ENCODE measurements at regions of chr16 and their contacts with region 1.

Region 1: GRCh38 chr16:23333034-23333579 is 31.0 kb downstream of the SCNN1B start:
- DNase-seq: no peak
- H3K4me3 ChIP-seq: no peak overlapping the region
- H3K27ac ChIP-seq: no peak overlapping the region
- H3K4me1 ChIP-seq: no peaks in the 10 kb centered on the region; a peak in 1 of 7 replicates
- H3K27me3 ChIP-seq: no peaks in the 10 kb centered on the region
- CTCF ChIP-seq: no peak
- EP300 ChIP-seq: no peak
- POLR2A ChIP-seq: no peak
- RAD21 ChIP-seq: no peak

Region 2: GRCh38 chr16:22673421-22673831 is 659.7 kb before region 1 on chr16:
- CTCF ChIA-PET with region 1: no interaction called
- POLR2A ChIA-PET with region 1: no interaction called
- DNase-seq: peak in 1 of 2 experiments; percentile 23
- H3K4me3 ChIP-seq: no peak overlapping the region
- H3K27ac ChIP-seq: no peak overlapping the region
- H3K4me1 ChIP-seq: peaks cover 0 to 6% (median 1%) of the 10 kb centered on the region in 4 experiments; a peak in 2 of 7 replicates
- H3K27me3 ChIP-seq: 0 out of 7 replicates have a peak, but pooled peaks cover 0 to 2% (median 0%) of the 10 kb centered on the region in 4 experiments
- CTCF ChIP-seq: no peak
- EP300 ChIP-seq: no peak
- POLR2A ChIP-seq: no peak
- RAD21 ChIP-seq: no peak

Region 3: GRCh38 chr16:23241005-23241404 is 92.1 kb before region 1 on chr16:
- CTCF ChIA-PET with region 1: no interaction called
- POLR2A ChIA-PET with region 1: no interaction called
- DNase-seq: no peak
- H3K4me3 ChIP-seq: no peak overlapping the region
- H3K27ac ChIP-seq: no peak overlapping the region
- H3K4me1 ChIP-seq: no peaks in the 10 kb centered on the region
- H3K27me3 ChIP-seq: no peaks in the 10 kb centered on the region
- CTCF ChIP-seq: no peak
- EP300 ChIP-seq: no peak
- POLR2A ChIP-seq: no peak
- RAD21 ChIP-seq: no peak

Region 4: DNA sequence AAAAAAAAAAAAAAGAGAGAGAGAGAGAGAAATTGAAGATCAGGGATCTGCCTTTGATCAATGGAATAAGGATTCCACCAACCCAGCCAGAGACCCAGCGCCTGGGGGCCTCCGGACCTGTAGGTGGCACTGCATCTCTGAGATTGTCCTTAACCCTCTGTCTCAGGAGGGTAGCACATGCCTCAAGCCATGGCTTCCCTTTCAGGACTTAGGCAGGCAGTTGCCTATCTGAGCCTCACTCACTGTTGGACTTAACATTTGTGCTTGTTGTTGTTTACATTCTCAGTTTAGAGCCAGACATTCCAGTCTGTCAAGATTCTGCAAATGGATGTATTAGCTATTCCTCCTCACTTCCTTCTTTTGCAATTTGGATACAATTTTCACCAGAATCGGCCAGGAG is 36.1 kb before region 1 on chr16:
- CTCF ChIA-PET with region 1: interaction called, 10 read pairs
- POLR2A ChIA-PET with region 1: no interaction called
- DNase-seq: peak in 1 of 2 experiments; percentile 81
- H3K4me3 ChIP-seq: no peak overlapping the region
- H3K27ac ChIP-seq: no peak overlapping the region
- H3K4me1 ChIP-seq: peaks cover 0 to 6% (median 1%) of the 10 kb centered on the region in 4 experiments; a peak in 3 of 7 replicates
- H3K27me3 ChIP-seq: peaks cover 3 to 8% (median 6%) of the 10 kb centered on the region in 4 experiments
- CTCF ChIP-seq: peak; percentile 67 to 88 (median 78)
- EP300 ChIP-seq: no peak
- POLR2A ChIP-seq: no peak
- RAD21 ChIP-seq: peak; percentile 57 to 64

Region 5: GRCh38 chr16:23316966-23317661 is 16.0 kb before region 1 on chr16:
- CTCF ChIA-PET with region 1: interaction called, 12 read pairs
- POLR2A ChIA-PET with region 1: no interaction called
- DNase-seq: no peak
- H3K4me3 ChIP-seq: no peak overlapping the region
- H3K27ac ChIP-seq: no peak overlapping the region
- H3K4me1 ChIP-seq: no peaks in the 10 kb centered on the region
- H3K27me3 ChIP-seq: no peaks in the 10 kb centered on the region
- CTCF ChIP-seq: no peak
- EP300 ChIP-seq: no peak
- POLR2A ChIP-seq: no peak
- RAD21 ChIP-seq: no peak

Region 6: DNA sequence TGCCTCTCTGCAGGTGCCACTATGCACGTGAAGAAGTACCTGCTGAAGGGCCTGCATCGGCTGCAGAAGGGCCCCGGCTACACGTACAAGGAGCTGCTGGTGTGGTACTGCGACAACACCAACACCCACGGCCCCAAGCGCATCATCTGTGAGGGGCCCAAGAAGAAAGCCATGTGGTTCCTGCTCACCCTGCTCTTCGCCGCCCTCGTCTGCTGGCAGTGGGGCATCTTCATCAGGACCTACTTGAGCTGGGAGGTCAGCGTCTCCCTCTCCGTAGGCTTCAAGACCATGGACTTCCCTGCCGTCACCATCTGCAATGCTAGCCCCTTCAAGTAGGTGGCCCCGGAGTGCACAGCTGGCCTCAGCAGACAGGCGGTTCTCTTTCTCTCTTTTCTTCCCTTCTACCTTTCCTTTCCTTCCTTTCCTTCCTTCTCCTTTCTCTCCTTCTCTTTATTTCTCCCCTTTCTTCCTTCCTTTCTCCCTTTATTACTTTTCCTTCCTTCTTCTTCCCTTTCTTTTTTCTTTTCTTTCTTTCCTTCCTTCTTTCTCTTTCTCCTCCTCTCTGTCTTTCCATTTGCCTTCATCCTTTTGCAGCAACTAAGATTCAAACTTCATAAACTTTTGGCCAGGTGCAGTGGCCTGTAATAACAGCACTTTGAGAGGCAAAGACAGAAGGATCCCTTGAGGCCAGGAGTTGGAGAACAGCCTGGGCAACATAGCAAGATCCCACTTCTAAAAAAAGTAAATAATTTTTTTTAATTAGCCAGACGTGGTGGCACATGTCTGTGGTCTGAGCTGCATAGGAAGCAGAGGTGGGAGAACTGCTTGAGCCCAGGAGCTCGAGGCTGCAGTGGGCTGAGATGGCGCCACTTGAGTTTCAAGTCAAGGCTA is 15.7 kb after region 1 on chr16:
- CTCF ChIA-PET with region 1: interaction called, 18 read pairs
- POLR2A ChIA-PET with region 1: no interaction called
- DNase-seq: peak; percentile 59 to 61
- H3K4me3 ChIP-seq: no peak overlapping the region
- H3K27ac ChIP-seq: no peak overlapping the region
- H3K4me1 ChIP-seq: peaks cover 0 to 4% (median under 1%) of the 10 kb centered on the region in 4 experiments; a peak in 3 of 7 replicates
- H3K27me3 ChIP-seq: no peaks in the 10 kb centered on the region
- CTCF ChIP-seq: peak; percentile 48 to 74 (median 62)
- EP300 ChIP-seq: no peak
- POLR2A ChIP-seq: no peak
- RAD21 ChIP-seq: peak; percentile 44 to 52; a peak in 3 of 4 replicates

Region 7: DNA sequence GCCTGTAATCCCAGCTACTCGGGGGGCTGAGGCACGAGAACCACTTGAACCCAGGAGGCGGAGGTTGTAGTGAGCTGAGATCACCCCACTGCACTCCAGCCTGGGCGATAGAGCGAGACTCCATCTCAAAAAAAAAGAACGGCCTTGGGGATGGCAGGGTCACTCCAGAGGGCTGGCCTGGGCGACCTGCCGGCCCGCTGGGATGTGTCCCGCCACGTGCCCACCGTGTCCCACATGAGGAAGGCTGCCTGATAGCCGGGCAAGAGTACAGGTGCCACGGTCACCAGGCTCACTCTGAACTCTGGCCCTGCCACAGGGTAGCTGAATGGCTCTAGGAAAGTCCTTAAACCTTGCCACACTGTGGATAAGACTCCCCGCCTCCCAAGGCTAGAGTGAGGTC is 52.3 kb after region 1 on chr16:
- CTCF ChIA-PET with region 1: no interaction called
- POLR2A ChIA-PET with region 1: no interaction called
- DNase-seq: no peak
- H3K4me3 ChIP-seq: no peak overlapping the region
- H3K27ac ChIP-seq: no peak overlapping the region
- H3K4me1 ChIP-seq: peaks cover 0 to 3% (median under 1%) of the 10 kb centered on the region in 4 experiments; a peak in 1 of 7 replicates
- H3K27me3 ChIP-seq: no peaks in the 10 kb centered on the region
- CTCF ChIP-seq: no peak
- EP300 ChIP-seq: no peak
- POLR2A ChIP-seq: no peak
- RAD21 ChIP-seq: no peak

Measured in H1 (cell line).